ENCODE measurements at regions of chr9 and their contacts with region 1.

Region 1: DNA sequence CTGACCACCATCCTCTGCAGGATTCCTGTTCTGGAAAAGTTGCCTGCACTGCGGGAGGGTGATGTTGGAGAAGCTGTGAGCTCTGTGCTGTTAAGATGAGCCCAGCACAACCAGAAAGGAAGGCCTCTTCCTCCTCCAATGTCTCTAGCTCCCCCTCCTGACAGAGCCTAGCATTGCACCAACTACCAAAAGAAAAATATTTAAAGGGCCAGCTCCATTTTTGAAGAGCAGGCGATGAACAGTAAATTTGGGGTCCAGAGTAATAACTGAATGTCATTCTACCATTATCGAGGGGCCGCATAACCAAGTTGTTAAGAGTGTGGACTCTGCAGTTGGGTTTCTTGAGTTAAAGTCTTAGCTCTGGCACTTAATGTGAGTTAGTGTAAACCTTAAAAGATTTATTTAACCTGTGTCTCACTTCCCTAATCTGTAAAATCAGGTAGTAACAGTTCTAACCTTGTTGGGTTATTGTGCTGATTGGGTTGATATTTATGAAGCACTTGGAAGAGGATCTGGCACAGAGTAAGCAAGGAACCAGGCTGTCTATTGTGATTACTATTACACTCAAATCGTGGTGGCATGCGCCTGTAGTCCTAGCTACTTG is 3.9 kb downstream of the TEX53 start:
- DNase-seq: no peak

Region 2: GRCh38 chr9:114348906-114349482 is 304.7 kb before region 1 on chr9:
- intact Hi-C with region 1: loop called in 1 of 2 experiments (anchors 10 kb)
- DNase-seq: peak; percentile 90

Region 3: DNA sequence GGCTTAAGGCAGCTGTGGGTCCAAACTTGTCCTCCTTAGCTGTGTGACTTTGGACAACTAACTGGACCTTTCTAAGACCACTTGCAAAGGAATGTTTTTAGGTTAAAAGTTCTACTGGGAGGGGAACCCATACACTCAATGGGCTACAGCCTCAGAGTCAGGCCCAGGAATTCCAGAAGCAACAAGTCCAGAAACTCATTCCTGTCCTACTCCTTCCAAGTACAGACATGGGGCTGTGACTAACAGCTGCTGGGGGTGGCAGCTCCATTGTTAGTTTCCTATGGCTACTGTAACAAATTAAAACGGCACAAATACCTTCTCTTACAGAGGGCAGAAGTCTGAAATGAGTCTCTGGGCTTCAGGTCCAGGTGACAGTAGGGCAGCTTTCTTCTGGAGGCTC is 253.4 kb before region 1 on chr9:
- intact Hi-C with region 1: loop called (anchors 5 kb)
- DNase-seq: no peak

Region 4: DNA sequence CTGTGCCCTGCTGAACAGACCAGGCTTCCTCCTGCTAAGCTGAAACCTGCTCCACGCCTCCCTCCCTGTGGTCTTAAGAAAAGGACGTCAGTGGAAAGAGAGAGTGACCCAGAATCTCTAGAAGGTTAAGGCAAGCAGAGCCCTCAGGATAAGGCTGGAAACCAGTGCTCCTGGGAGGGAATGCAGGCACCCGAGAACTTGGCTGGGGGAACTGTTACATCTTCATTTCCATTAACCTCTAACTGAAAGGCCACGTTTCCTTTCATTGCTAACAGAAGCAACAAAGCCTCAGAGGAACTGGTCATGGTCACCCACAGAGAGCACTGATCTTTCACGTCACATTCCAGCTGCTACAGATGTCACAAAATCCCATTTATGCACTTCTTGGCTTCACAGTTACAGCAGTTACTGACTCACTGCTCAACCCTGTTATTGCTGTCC is 239.8 kb before region 1 on chr9:
- intact Hi-C with region 1: loop called in 1 of 2 experiments (anchors 5 kb)
- DNase-seq: no peak

Region 5: GRCh38 chr9:114484854-114485443 is 168.7 kb before region 1 on chr9:
- intact Hi-C with region 1: loop called in 1 of 2 experiments (anchors 5 kb)
- DNase-seq: no peak

Measured in posterior vena cava (tissue), 2 donors.